OCI-LY7 (cell line): ENCODE measurements at regions of chr1 and their contacts with region 1.

Region 1: DNA sequence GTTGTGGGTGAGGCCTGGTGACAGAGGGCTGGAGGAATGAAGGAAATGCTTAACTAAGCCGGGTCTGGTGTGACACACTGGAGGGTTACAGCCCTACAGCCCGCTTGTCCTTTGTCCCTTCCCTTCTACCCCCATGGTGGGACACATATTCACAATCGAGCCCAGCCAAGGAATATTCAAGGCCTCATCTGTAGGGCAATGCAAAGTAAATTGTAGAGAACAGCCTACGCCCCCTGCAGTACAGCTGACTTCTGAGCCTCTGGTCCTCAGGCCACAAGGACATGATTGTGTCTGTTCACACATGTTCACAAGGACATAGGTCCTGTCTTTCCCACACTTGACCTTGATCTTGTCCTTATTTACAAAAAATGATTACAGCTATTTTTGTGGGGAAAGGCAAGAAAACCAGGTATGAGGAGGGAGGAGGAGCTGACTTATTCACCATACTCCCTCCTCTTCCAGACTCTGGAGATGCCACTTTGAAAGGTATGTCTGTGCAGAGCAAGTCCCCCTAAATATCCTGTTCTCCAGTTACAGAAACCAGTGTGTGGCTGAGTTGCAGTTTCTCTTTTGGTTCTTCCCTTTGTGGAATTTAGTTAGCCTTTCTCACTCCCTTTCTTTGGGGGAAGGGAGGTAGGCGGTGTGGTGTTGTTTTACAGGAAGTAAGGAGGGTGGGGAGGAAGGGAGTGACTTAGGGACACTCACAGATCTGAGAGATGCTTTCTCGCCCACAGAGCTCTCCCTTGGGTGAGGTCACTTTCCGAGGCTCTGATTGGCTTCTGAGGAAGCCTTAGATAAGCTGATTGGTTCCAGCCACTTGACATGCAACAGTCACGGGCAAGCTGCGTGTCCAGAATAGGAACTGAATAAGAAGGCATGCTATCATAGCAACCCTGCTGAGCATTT is 14.6 kb downstream of the POLR3GL start:
- DNase-seq: peak; percentile 98
- H3K4me3 ChIP-seq: peak overlapping the region; percentile 36
- H3K27ac ChIP-seq: peak overlapping the region; percentile 94
- H3K4me1 ChIP-seq: peaks cover 68% of the 10 kb centered on the region
- CTCF ChIP-seq: peak; percentile 70

Region 2: GRCh38 chr1:145425436-145426029 is 553.6 kb before region 1 on chr1 and contains the start of gene NBPF20:
- CTCF ChIA-PET with region 1: no interaction called
- POLR2A ChIA-PET with region 1: no interaction called
- intact Hi-C with region 1: no loop called
- DNase-seq: peak; percentile 85
- H3K4me3 ChIP-seq: peak within 1 kb of the TSS; percentile 73
- H3K27ac ChIP-seq: no peak within 1 kb of the TSS
- H3K4me1 ChIP-seq: no peaks in the 10 kb centered on the region
- CTCF ChIP-seq: no peak
- total RNA-seq, gene NBPF20: 3.8 and 4.4 TPM in 2 replicates

Region 3: GRCh38 chr1:145845514-145846161 is 133.5 kb before region 1 on chr1 and contains the start of gene NUDT17:
- CTCF ChIA-PET with region 1: no interaction called
- POLR2A ChIA-PET with region 1: no interaction called
- intact Hi-C with region 1: loop called (anchors 5 kb)
- DNase-seq: peak; percentile 91
- H3K4me3 ChIP-seq: peak within 1 kb of the TSS; percentile 72
- H3K27ac ChIP-seq: peak within 1 kb of the TSS; percentile 92
- H3K4me1 ChIP-seq: peaks cover 33% of the 10 kb centered on the region
- CTCF ChIP-seq: peak; percentile 98
- total RNA-seq, gene NUDT17: 10.8 and 16.9 TPM in 2 replicates

Region 4: GRCh38 chr1:145957443-145958319 is 21.4 kb before region 1 on chr1 and contains the start of gene LIX1L:
- CTCF ChIA-PET with region 1: no interaction called
- POLR2A ChIA-PET with region 1: interaction called, 13 read pairs
- intact Hi-C with region 1: no loop called
- DNase-seq: peak; percentile 98
- H3K4me3 ChIP-seq: peak within 1 kb of the TSS; percentile 86
- H3K27ac ChIP-seq: peak within 1 kb of the TSS; percentile 53
- H3K4me1 ChIP-seq: peaks cover 63% of the 10 kb centered on the region
- CTCF ChIP-seq: no peak
- total RNA-seq, gene LIX1L: 10.2 and 11.6 TPM in 2 replicates

Region 5: DNA sequence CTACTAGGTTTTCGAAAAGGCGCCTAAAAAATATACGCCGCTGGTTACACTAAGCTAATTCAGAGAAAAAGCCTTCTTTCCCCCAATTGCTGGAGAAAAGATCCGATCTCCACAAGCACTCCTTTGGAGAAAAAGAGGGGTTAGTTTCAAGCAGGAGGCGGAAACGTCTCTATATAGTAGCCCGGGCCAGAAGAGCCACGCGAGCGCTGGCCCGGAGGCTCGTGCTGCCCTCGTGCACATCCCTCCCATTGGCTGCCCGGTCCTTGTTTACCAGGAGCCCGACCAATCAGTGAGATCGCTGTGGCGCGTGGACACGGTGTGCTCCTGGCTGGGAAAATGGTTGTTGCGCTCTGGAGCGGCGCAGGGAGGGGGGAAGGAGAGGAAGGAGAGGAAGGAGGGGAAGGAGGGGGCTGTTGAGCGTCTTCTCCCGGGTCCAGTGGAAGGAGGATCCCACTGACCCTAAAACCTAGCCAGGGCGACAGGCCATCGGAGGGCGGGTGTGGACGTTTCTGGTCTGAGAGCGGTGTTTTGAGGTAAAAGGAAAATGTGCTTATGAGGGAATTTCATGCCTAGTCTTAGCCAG is 17.4 kb after region 1 on chr1 and contains the start of gene TXNIP:
- CTCF ChIA-PET with region 1: interaction called, 10 read pairs
- POLR2A ChIA-PET with region 1: interaction called, 67 read pairs
- intact Hi-C with region 1: loop called (anchors 1 kb)
- DNase-seq: peak; percentile 95
- H3K4me3 ChIP-seq: peak within 1 kb of the TSS; percentile 81
- H3K27ac ChIP-seq: peak within 1 kb of the TSS; percentile 81
- H3K4me1 ChIP-seq: peaks cover 50% of the 10 kb centered on the region
- CTCF ChIP-seq: no peak
- total RNA-seq, gene TXNIP: 99.9 and 144 TPM in 2 replicates

Region 6: GRCh38 chr1:146012737-146013403 is 33.8 kb after region 1 on chr1:
- CTCF ChIA-PET with region 1: interaction called, 20 read pairs
- POLR2A ChIA-PET with region 1: interaction called, 10 read pairs
- intact Hi-C with region 1: loop called (anchors 1 kb)
- DNase-seq: peak; percentile 76
- H3K4me3 ChIP-seq: no peak overlapping the region
- H3K27ac ChIP-seq: no peak overlapping the region
- H3K4me1 ChIP-seq: peaks cover 3% of the 10 kb centered on the region
- CTCF ChIP-seq: peak; percentile 99